Ovary (tissue), 10 donors: ENCODE measurements at regions of chr2 and their contacts with region 1.

Region 1: DNA sequence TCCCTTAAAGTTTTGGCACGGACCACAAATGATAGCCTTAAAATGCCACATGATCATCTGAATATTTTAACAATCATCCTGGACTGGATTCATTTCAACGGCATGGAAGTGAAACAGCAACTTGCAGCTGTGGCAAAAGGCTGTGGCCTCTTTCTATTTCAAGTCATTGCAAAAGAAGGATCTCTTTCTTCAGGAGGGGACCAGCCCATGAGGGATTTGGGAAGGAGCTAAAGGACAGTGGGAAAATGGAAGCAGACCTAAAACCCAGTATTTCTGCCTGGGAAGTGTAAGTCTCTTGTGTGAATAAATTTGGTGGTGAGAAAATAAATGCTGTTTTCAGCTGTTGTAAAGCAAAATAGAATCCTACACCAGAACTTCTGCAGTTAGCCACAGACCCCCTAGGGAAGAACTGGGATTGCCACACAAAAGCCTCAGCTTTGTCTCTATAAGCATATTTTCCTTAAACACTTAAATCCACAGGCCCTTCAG is 107.3 kb upstream of the ZFP36L2 start:
- DNase-seq: no peak
- H3K4me3 ChIP-seq: no peak overlapping the region
- H3K27ac ChIP-seq: peak overlapping the region in 1 of 2 donors; percentile 50
- H3K4me1 ChIP-seq: peaks cover 32% of the 10 kb centered on the region
- H3K27me3 ChIP-seq: no peaks in the 10 kb centered on the region
- CTCF ChIP-seq: no peak
- EP300 ChIP-seq: no peak
- POLR2A ChIP-seq: no peak

Region 2: GRCh38 chr2:42957109-42957860 is 376.4 kb before region 1 on chr2:
- intact Hi-C with region 1: no loop called
- DNase-seq: no peak
- H3K4me3 ChIP-seq: no peak overlapping the region
- H3K27ac ChIP-seq: peak overlapping the region; percentile 49 to 94
- H3K4me1 ChIP-seq: peaks cover 52% of the 10 kb centered on the region
- H3K27me3 ChIP-seq: no peaks in the 10 kb centered on the region
- CTCF ChIP-seq: no peak
- EP300 ChIP-seq: no peak
- POLR2A ChIP-seq: no peak

Region 3: DNA sequence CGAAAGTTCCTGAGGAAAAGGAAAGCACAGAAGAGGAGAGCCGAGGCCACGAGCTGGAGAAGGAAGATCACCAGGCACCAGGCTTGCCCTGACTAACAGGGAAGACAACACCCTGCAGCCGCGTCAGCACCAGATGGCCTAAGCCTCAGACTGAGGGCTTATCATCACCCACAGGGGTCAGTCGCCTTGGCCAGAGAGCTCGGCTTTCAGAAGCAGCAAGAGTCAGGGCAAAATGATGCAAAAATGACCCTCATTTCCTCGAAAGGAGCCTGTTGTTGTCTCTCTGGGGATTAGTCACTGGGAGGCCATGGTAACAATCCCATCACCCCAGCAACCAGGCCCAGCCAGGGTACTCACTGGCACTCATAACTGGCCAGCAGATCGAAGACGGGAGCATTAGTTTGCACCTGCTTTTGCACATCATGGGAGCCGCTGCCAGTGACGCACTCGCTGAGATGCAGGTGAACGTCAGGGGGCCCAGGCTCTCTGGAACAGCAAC is 64.6 kb before region 1 on chr2:
- intact Hi-C with region 1: loop called in 1 of 4 experiments (anchors 10 kb)
- DNase-seq: peak; percentile 86 to 96 (median 92)
- H3K4me3 ChIP-seq: no peak overlapping the region
- H3K27ac ChIP-seq: peak overlapping the region; percentile 86 to 92
- H3K4me1 ChIP-seq: peaks cover 28% of the 10 kb centered on the region
- H3K27me3 ChIP-seq: no peaks in the 10 kb centered on the region
- CTCF ChIP-seq: no peak
- EP300 ChIP-seq: peak; percentile 81
- POLR2A ChIP-seq: no peak